B cell (primary cell): ENCODE measurements at regions of chr3 and their contacts with region 1.

Region 1: DNA sequence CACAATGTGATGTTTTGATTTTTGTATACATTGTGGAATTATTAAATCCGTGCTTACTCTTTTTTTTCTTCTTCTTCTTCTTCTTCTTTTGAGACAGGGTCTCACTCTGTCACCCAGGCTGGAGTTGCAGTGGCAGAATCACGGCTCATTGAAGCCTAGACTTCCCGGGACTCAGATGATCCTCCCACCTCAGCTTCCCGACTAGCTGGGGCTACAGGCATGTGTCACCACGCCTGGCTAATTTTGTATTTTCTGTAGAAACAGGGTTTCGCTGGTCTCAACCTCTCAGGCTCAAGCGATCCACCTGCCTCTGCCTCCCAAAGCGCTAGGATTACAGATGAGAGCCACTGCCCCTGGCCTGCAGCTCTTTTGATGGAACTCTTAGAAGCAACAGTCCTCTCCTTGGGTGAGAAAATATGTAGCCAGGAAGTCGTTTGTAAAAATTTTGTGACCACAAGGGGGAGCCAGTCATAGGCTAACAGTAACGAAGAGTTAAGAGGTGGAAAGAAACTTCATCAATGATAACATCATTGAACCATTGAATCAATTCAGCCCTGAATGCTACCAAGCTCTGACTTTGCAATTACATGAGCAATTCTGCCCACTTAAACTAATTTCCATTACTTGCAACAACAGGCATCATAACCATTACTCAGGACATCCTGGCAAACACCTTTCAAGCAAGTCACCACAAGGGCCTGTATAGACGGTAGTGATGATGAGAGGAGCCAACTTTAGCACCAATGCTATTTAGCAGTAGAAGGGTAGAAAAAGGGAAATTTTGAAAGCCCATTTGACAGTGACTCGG is 16.7 kb upstream of the CMTM7 start:
- DNase-seq: peak; percentile 89
- ATAC-seq: peak; percentile 67
- H3K4me3 ChIP-seq: no peak overlapping the region
- H3K4me3 Mint-ChIP-seq: no peak overlapping the region
- H3K27ac ChIP-seq: no peak overlapping the region
- H3K27ac Mint-ChIP-seq: no peak overlapping the region
- H3K4me1 ChIP-seq: peaks cover 21 to 26% of the 10 kb centered on the region in 2 donors
- H3K4me1 Mint-ChIP-seq: peaks cover 26% of the 10 kb centered on the region
- H3K27me3 ChIP-seq: no peaks in the 10 kb centered on the region
- H3K27me3 Mint-ChIP-seq: peaks cover 4% of the 10 kb centered on the region
- CTCF ChIP-seq: peak; percentile 84

Region 2: GRCh38 chr3:31802981-31803740 is 571.8 kb before region 1 on chr3:
- CTCF ChIA-PET with region 1: no interaction called
- POLR2A ChIA-PET with region 1: no interaction called
- intact Hi-C with region 1: no loop called
- DNase-seq: peak; percentile 26
- ATAC-seq: peak; percentile 87
- H3K4me3 ChIP-seq: no peak overlapping the region
- H3K4me3 Mint-ChIP-seq: peak overlapping the region; percentile 19
- H3K27ac ChIP-seq: peak overlapping the region in 1 of 2 donors; percentile 56
- H3K27ac Mint-ChIP-seq: peak overlapping the region; percentile 78
- H3K4me1 ChIP-seq: peaks cover 12 to 13% of the 10 kb centered on the region in 2 donors
- H3K4me1 Mint-ChIP-seq: peaks cover 52% of the 10 kb centered on the region
- H3K27me3 ChIP-seq: no peaks in the 10 kb centered on the region
- H3K27me3 Mint-ChIP-seq: no peaks in the 10 kb centered on the region
- CTCF ChIP-seq: no peak

Region 3: GRCh38 chr3:32391643-32392535 is 16.9 kb after region 1 on chr3 and contains the start of gene CMTM7:
- CTCF ChIA-PET with region 1: interaction called, 115 read pairs
- POLR2A ChIA-PET with region 1: interaction called, 4 read pairs
- intact Hi-C with region 1: loop called (anchors 1 kb)
- DNase-seq: peak; percentile 71
- ATAC-seq: peak; percentile 63
- H3K4me3 ChIP-seq: peak within 1 kb of the TSS; percentile 42 to 92 (median 73)
- H3K4me3 Mint-ChIP-seq: peak within 1 kb of the TSS; percentile 96
- H3K27ac ChIP-seq: peak within 1 kb of the TSS; percentile 72 to 82
- H3K27ac Mint-ChIP-seq: peak within 1 kb of the TSS; percentile 97
- H3K4me1 ChIP-seq: peaks cover 28 to 40% of the 10 kb centered on the region in 2 donors
- H3K4me1 Mint-ChIP-seq: peaks cover 52% of the 10 kb centered on the region
- H3K27me3 ChIP-seq: no peaks in the 10 kb centered on the region
- H3K27me3 Mint-ChIP-seq: no peaks in the 10 kb centered on the region
- CTCF ChIP-seq: no peak
- total RNA-seq, gene CMTM7: 68.4 and 71.5 TPM in 2 replicates

Region 4: GRCh38 chr3:32406486-32407408 is 31.8 kb after region 1 on chr3:
- CTCF ChIA-PET with region 1: interaction called, 14 read pairs
- POLR2A ChIA-PET with region 1: no interaction called
- intact Hi-C with region 1: loop called (anchors 5 kb)
- DNase-seq: no peak
- ATAC-seq: no peak
- H3K4me3 ChIP-seq: no peak overlapping the region
- H3K4me3 Mint-ChIP-seq: no peak overlapping the region
- H3K27ac ChIP-seq: no peak overlapping the region
- H3K27ac Mint-ChIP-seq: peak overlapping the region; percentile 55
- H3K4me1 ChIP-seq: peaks cover 26 to 45% of the 10 kb centered on the region in 2 donors
- H3K4me1 Mint-ChIP-seq: peaks cover 65% of the 10 kb centered on the region
- H3K27me3 ChIP-seq: no peaks in the 10 kb centered on the region
- H3K27me3 Mint-ChIP-seq: no peaks in the 10 kb centered on the region
- CTCF ChIP-seq: no peak

Region 5: DNA sequence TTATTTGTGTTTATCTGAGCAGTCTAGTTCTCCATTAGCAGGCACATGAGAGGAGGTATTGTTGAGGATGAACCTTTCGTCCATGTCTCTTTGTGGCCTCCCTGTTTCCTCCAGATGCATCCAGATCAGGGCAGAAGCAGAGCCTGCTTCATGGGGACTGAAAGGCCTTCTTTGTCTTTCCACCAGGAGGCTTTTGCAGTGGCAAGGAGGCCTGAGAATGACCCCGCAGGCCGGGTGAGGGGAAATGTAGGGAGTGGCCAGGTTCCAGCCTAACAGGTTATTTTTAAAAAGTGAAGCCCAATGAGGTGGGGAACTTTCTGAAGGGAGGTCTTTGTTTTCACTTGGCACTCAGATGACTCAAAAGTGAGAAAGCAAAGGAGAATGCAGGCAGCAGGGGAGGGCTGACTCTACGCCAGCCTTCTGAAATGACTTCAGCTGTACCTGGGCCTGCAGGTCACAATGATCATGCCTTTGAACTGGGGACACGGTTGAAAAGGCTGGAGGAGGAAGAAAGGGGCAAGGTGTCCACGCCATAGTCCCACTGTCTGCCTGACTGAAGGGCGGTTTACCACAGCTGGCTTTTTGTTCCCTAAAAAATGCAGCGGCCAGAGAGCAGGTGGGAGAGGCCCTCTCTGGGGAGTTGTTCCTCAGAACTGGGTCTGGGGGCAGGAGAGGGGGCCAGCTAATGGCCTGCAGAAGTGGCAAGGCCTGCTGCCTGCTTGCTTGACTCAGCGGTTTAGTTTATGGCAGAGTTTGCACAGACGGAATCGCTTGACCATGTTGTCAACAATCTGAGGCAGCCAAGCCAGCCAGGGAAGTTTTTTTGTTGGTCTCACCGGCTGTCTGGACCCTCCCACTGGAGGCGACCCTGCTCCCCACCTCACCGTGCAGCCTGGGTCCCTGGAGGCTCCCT is 45.4 kb after region 1 on chr3:
- CTCF ChIA-PET with region 1: interaction called, 11 read pairs
- POLR2A ChIA-PET with region 1: no interaction called
- intact Hi-C with region 1: no loop called
- DNase-seq: peak; percentile 80
- ATAC-seq: peak; percentile 77
- H3K4me3 ChIP-seq: peak overlapping the region in 3 of 5 experiments; percentile 2 to 38 (median 11)
- H3K4me3 Mint-ChIP-seq: peak overlapping the region; percentile 84
- H3K27ac ChIP-seq: peak overlapping the region; percentile 79 to 86
- H3K27ac Mint-ChIP-seq: peak overlapping the region; percentile 97
- H3K4me1 ChIP-seq: peaks cover 67 to 73% of the 10 kb centered on the region in 2 donors
- H3K4me1 Mint-ChIP-seq: peaks cover 84% of the 10 kb centered on the region
- H3K27me3 ChIP-seq: no peaks in the 10 kb centered on the region
- H3K27me3 Mint-ChIP-seq: no peaks in the 10 kb centered on the region
- CTCF ChIP-seq: no peak

Region 6: DNA sequence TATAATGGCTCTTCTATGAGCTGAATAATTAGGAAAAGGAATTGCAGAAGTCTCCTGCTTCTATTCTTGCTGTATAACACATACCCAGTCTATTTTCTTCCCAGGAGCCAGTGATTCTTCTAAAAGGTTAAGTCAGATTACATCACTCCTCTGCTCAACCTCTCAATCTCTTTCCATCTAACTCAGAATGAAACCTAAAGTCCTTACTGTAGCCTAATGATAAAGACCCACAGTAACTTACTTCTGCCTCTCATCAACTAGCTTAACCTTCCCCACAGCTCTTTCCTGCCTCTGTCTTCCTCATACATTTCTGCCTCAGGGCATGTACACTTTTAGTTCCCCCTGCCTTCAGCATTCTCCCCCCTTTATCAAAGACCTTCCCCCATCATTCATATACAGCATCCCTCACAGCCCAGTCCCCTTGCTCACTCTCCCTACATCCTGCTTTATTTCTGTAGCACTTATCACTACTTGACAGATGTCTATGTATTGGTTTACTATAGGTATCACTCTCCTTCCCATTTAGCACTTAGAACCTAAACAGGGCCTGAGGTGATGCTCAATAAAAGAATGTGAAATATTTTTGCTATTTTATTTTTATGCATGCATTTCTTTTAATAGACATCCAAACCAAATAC is 156.1 kb after region 1 on chr3:
- CTCF ChIA-PET with region 1: no interaction called
- POLR2A ChIA-PET with region 1: no interaction called
- intact Hi-C with region 1: no loop called
- DNase-seq: no peak
- ATAC-seq: no peak
- H3K4me3 ChIP-seq: no peak overlapping the region
- H3K4me3 Mint-ChIP-seq: no peak overlapping the region
- H3K27ac ChIP-seq: no peak overlapping the region
- H3K27ac Mint-ChIP-seq: peak overlapping the region; percentile 22
- H3K4me1 ChIP-seq: no peaks in the 10 kb centered on the region
- H3K4me1 Mint-ChIP-seq: no peaks in the 10 kb centered on the region
- H3K27me3 ChIP-seq: no peaks in the 10 kb centered on the region
- H3K27me3 Mint-ChIP-seq: no peaks in the 10 kb centered on the region
- CTCF ChIP-seq: no peak

Region 7: GRCh38 chr3:32570421-32571191 is 195.6 kb after region 1 on chr3 and contains the start of gene DYNC1LI1:
- CTCF ChIA-PET with region 1: no interaction called
- POLR2A ChIA-PET with region 1: no interaction called
- intact Hi-C with region 1: loop called (anchors 10 kb)
- DNase-seq: peak; percentile 95
- ATAC-seq: peak; percentile 96
- H3K4me3 ChIP-seq: peak within 1 kb of the TSS; percentile 55 to 96 (median 92)
- H3K4me3 Mint-ChIP-seq: peak within 1 kb of the TSS; percentile 94
- H3K27ac ChIP-seq: peak within 1 kb of the TSS; percentile 84 to 93
- H3K27ac Mint-ChIP-seq: peak within 1 kb of the TSS; percentile 94
- H3K4me1 ChIP-seq: peaks cover 22 to 24% of the 10 kb centered on the region in 2 donors
- H3K4me1 Mint-ChIP-seq: peaks cover 29% of the 10 kb centered on the region
- H3K27me3 ChIP-seq: no peaks in the 10 kb centered on the region
- H3K27me3 Mint-ChIP-seq: no peaks in the 10 kb centered on the region
- CTCF ChIP-seq: no peak
- total RNA-seq, gene DYNC1LI1: 38.8 and 47.8 TPM in 2 replicates